Mammary epithelial cell (primary cell): ENCODE measurements at regions of chr2 and their contacts with region 1.

Region 1: GRCh38 chr2:230411570-230412370 is 4.2 kb upstream of the SP100 start:
- DNase-seq: peak; percentile 58
- H3K4me3 ChIP-seq: peak overlapping the region; percentile 59 to 78 (median 60)
- H3K27ac ChIP-seq: peak overlapping the region; percentile 42
- H3K4me1 ChIP-seq: peaks cover 30% of the 10 kb centered on the region
- H3K27me3 ChIP-seq: no peaks in the 10 kb centered on the region
- CTCF ChIP-seq: no peak

Region 2: GRCh38 chr2:229921892-229922445 is 489.8 kb before region 1 on chr2 and contains the start of gene TRIP12:
- CTCF ChIA-PET with region 1: no interaction called
- dilution Hi-C with region 1: no loop called
- in situ Hi-C with region 1: no loop called
- intact Hi-C with region 1: loop called (anchors 2 kb)
- DNase-seq: peak; percentile 97
- H3K4me3 ChIP-seq: peak within 1 kb of the TSS; percentile 74 to 84 (median 80)
- H3K27ac ChIP-seq: peak within 1 kb of the TSS; percentile 79
- H3K4me1 ChIP-seq: peaks cover 14% of the 10 kb centered on the region
- H3K27me3 ChIP-seq: no peaks in the 10 kb centered on the region
- CTCF ChIP-seq: no peak
- total RNA-seq, gene TRIP12: 235 to 245 TPM

Region 3: DNA sequence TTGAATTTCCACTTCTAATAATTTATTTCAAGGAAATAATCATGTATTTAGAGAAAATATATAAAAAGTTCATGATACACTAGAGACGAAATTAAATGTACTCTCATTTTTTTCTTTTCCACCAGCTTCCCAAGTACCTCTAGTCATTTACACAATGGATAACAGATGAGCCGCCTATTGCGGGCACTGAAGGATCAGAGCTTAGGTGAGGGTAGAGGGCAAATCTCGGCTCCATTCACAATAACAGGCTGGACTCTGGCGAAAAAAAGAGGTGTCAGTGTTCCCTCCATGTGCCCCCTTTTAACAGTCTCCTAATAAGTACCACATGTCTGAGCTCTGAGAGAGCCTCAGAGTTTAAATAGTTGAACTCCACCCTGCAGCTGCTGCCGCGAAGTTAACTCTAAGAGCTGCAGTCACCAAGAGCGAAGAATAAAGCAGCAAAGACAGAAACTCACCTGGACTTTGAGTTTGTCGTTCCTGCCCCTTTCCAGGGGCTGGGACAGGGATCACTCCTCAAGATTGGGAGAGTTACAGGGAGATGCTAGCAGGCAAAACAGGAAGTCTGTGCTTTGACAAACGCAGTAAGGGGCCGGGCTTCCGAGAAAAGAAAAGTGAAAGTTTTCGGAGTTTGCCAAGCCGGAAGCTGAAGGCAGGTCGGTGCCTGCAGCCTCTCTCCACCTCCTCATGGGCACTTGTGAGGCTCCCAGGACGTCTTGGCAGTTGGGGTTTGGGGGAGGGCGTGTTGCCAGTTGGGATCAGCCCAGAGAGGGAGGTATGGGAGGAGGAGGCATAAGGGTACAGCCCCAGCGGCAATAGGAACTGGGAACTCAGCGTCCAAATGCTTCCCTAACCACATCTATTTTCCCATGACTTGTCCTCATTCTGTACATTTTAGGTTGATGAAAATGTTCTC is 192.1 kb before region 1 on chr2 and contains the start of gene SP110:
- CTCF ChIA-PET with region 1: no interaction called
- dilution Hi-C with region 1: no loop called
- in situ Hi-C with region 1: loop called in 1 of 2 experiments (anchors 25 kb)
- intact Hi-C with region 1: loop called (anchors 5 kb)
- DNase-seq: peak; percentile 96
- H3K4me3 ChIP-seq: peak within 1 kb of the TSS; percentile 53 to 64 (median 59)
- H3K27ac ChIP-seq: peak within 1 kb of the TSS; percentile 57
- H3K4me1 ChIP-seq: peaks cover 21% of the 10 kb centered on the region
- H3K27me3 ChIP-seq: no peaks in the 10 kb centered on the region
- CTCF ChIP-seq: no peak
- total RNA-seq, gene SP110: 11.2 to 12.9 TPM

Region 4: DNA sequence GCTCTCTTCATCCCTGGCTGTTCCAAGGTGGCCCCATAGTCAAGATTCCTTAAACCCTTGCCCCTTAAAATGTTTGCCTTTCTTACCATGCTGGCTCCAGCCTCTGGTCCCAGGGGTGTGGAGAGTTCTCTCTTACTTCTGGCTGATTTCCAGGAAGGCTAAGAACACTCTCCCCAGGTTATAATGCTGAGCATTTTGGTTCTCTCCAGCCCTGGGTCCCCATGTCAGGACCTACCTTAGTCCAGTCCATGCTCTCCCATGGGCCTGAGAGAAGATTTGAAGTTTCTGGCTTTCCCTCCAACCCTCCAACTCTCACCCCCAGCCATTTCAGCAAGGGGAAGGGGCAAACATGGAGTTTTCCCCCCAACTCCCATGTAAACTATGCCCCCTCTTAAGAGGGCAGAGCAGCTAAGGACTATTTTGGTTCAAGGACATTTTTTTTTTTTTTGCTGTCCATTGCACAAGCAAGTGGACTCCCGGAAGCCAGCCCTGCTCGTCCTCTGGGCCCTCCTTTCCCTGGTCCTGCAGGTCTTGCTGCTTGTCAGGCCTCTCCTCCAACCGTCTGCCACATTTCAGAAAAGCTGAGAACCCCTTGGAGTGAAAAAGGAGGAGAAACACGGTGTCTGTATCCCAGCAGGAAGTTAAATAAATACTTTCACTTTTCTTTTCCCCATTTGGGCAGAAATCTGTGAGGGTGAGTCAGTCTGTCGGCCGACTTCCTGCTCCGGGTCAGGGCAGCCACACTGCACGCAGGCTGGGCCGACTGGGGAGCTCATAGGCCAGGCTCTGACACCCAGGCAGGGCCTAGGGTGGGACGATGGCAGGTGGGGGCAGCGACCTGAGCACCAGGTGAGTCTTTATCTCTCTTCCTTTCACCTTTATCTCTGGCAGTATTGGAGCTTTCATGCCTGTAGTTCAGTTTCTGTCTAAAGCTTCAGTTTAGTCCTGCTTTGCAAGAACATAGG is 85.0 kb before region 1 on chr2 and contains the start of gene SP140L:
- CTCF ChIA-PET with region 1: no interaction called
- dilution Hi-C with region 1: no loop called
- in situ Hi-C with region 1: no loop called
- intact Hi-C with region 1: loop called (anchors 2 kb)
- DNase-seq: peak; percentile 68
- H3K4me3 ChIP-seq: peak within 1 kb of the TSS; percentile 45 to 64 (median 61)
- H3K27ac ChIP-seq: peak within 1 kb of the TSS; percentile 63
- H3K4me1 ChIP-seq: peaks cover 11% of the 10 kb centered on the region
- H3K27me3 ChIP-seq: no peaks in the 10 kb centered on the region
- CTCF ChIP-seq: no peak
- total RNA-seq, gene SP140L: 2.5 to 14.7 TPM

Region 5: GRCh38 chr2:230472621-230473018 is 60.9 kb after region 1 on chr2:
- CTCF ChIA-PET with region 1: no interaction called
- dilution Hi-C with region 1: no loop called
- in situ Hi-C with region 1: no loop called
- intact Hi-C with region 1: loop called (anchors 5 kb)
- DNase-seq: peak; percentile 50
- H3K4me3 ChIP-seq: no peak overlapping the region
- H3K27ac ChIP-seq: no peak overlapping the region
- H3K4me1 ChIP-seq: peaks cover 5% of the 10 kb centered on the region
- H3K27me3 ChIP-seq: no peaks in the 10 kb centered on the region
- CTCF ChIP-seq: no peak

Region 6: GRCh38 chr2:230684270-230685168 is 272.7 kb after region 1 on chr2:
- CTCF ChIA-PET with region 1: no interaction called
- dilution Hi-C with region 1: no loop called
- in situ Hi-C with region 1: no loop called
- intact Hi-C with region 1: loop called (anchors 10 kb)
- DNase-seq: peak; percentile 80
- H3K4me3 ChIP-seq: no peak overlapping the region
- H3K27ac ChIP-seq: peak overlapping the region; percentile 76
- H3K4me1 ChIP-seq: peaks cover 54% of the 10 kb centered on the region
- H3K27me3 ChIP-seq: no peaks in the 10 kb centered on the region
- CTCF ChIP-seq: no peak